ENCODE measurements at regions of chr14 and their contacts with region 1.

Region 1: DNA sequence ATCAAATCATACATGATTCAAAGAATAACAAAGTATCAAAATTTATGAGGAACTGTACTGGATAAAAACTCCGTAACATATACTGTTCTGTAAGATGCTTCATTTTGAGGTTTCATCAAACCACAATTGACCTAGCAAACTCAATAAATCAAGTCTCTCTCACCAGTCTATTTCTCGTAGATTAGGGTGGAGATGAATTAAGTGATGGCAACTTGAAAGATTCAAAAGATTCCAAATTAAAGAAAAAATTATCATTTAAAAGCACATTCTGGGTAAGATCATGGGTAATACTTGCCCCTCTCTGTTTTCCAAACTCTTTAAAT is 74.4 kb downstream of the PAPLN start:
- DNase-seq: no peak
- H3K4me3 ChIP-seq: no peak overlapping the region
- H3K27ac ChIP-seq: peak overlapping the region in 1 of 2 experiments; percentile 53; a peak in 2 of 4 replicates
- H3K4me1 ChIP-seq: peaks cover 0 to 9% of the 10 kb centered on the region in 2 experiments; a peak in 1 of 4 replicates
- H3K27me3 ChIP-seq: no peaks in the 10 kb centered on the region
- CTCF ChIP-seq: no peak
- EP300 ChIP-seq: no peak
- RAD21 ChIP-seq: no peak

Region 2: DNA sequence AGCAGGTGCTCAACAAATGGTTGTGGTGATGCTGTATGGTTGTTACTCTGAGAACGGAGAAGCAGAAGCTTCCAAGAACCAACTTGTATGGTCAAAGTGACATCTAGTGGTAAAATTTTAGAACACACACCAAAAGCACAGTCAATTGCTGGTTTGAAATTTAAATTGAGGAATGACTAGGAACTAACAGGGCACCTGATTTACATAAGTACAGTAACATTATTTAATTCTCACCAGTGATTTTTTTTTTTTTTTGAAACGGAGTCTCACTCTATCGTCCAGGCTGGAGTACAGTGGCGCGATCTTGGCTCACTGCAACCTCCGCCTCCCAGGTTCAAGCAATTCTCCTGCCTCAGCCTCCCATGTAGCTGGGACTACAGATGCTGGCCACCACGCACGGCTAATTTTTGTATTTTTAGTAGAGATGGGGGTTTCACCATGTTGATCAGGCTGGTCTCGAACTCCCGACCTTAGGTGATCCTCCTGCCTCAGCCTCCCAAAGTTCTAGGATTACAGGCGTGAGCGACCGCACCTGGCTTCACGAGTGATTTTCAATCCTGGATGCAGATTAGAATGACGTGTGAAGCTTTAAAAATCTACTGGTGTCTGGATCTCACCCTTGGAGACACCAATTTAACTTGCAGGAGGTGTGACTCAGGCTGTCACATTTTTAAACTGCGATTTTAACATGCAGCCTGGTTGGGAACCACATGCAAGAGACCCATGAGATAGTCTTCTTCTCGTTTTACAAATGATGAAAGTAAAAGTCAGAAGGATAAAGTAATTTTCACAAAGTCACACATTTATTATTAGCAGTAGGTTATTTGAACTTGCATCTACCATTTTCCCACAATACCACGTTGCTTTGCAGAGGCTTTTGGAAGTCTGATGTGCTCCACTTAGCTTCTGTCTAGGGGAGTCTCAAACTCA is 160.8 kb after region 1 on chr14:
- CTCF ChIA-PET with region 1: interaction called, 23 read pairs
- POLR2A ChIA-PET with region 1: no interaction called
- DNase-seq: peak; percentile 67
- H3K4me3 ChIP-seq: no peak overlapping the region; a peak in 1 of 4 replicates
- H3K27ac ChIP-seq: no peak overlapping the region
- H3K4me1 ChIP-seq: no peaks in the 10 kb centered on the region
- H3K27me3 ChIP-seq: no peaks in the 10 kb centered on the region
- CTCF ChIP-seq: peak; percentile 80
- EP300 ChIP-seq: no peak
- RAD21 ChIP-seq: peak; percentile 96

Measured in SK-N-SH (cell line).